Dorsolateral prefrontal cortex (tissue), 120 donors: ENCODE measurements at regions of chr17 and their contacts with region 1.

Region 1: DNA sequence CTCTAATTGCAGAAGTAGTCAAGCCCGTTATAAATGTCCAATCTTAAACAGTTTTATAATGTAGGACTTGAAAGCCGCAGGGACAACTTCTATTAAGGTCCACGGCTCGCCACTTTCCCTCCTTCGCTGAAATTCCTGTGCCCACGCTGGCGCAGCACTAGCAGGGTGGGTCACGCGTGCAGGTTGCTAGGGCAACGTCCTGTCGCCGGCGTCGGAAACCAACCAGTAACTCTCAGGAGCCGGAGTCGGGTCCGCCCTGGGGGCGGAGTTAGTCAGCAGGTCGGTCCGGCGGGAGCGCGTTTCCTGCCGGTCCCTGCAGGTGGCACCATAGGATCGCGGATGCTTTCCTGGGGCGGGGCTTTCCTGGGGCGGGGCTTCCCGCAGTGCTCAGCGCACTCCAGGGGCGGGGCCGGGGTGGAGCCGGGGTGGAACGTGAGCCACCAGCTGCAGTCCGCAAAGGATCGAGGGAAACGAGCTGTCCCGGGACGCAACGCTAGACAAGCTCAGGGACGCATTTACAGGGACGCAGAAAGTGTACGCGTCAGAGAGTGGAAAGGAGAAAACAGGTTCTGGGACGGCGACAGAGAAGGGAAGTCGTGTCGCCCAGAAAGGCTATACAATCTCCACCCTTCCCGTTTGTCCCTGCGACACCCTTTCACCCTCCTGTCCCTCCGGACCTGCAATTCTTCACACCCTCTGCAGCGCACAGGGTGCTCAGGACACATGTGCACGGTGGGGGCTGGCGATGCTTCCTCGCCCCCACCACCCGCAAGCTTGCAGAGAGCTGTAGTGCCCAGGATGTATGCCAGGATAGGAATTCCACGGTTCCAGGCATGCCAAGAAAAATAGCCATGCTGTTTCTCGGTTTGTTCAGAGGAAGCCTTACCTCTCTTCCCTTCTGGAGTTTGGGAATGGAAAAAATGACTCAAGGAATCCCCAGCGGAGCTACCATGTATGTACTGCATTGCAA is 12.4 kb downstream of the COPZ2 start:
- DNase-seq: peak; percentile 97 to 99 (median 98)
- H3K4me3 ChIP-seq: peak overlapping the region; percentile 43 to 84 (median 65)
- H3K27ac ChIP-seq: peak overlapping the region in 47 of 59 donors; percentile 5 to 92 (median 84)
- H3K27me3 ChIP-seq: no peaks in the 10 kb centered on the region
- CTCF ChIP-seq: peak; percentile 55 to 91 (median 79)

Region 2: DNA sequence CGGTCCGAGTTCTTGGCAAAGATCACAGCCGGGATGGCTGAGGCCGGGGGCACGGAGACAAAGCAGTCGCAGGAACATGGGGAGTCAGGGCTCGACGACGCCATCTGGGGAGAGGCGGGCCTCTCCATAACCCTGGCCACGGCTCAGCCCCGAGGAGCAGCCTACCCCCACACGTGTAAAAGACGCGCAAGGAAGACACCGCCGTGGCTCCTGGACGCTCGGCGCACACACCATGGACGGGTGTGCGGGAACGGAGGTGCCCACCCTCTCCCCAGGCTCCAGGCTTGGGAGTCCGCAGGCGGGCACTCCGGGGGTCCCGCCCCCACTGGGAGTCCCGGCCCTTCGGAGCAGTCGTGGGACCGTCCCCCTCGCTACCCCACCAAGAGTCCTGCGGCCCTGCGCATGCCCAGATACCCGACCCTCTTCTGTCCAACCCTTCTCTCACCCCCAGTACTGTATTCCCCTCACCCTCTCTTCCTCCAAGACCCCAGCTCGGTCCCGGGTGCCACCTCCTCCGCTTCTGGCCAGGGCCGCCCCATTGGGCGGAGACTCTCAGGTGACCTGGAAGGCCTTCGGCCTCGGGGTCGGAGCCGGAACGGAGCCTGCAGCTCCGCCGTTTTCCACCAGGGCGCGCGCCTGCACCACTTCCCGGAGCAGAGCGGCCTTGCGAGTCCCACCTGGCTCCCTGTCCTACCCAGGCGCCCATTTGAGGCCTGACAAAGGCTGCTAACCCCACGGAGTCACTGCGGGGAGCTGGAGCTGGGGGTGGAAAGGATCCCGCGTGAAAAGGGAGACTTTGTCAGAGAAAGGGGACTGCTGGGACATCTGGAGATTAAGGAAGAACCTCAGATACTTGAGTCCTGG is 184.2 kb before region 1 on chr17 and contains the start of gene SCRN2:
- intact Hi-C with region 1: loop called in 1 of 2 experiments (anchors 5 kb)
- DNase-seq: peak; percentile 78 to 93 (median 86)
- H3K4me3 ChIP-seq: peak within 1 kb of the TSS; percentile 53 to 97 (median 80)
- H3K27ac ChIP-seq: peak within 1 kb of the TSS in 54 of 59 donors; percentile 1 to 88 (median 66)
- H3K27me3 ChIP-seq: peaks cover 0 to 16% (median under 1%) of the 10 kb centered on the region in 45 donors
- CTCF ChIP-seq: peak; percentile 75 to 99 (median 96)
- total RNA-seq, gene SCRN2: 18.1 to 42.2 (median 27.6) TPM

Region 3: GRCh38 chr17:48074315-48075081 is 49.3 kb after region 1 on chr17:
- intact Hi-C with region 1: loop called (anchors 1 to 2 kb)
- DNase-seq: peak in 6 of 10 donors; percentile 37 to 90 (median 68)
- H3K4me3 ChIP-seq: no peak overlapping the region
- H3K27ac ChIP-seq: peak overlapping the region in 23 of 59 donors; percentile 7 to 67 (median 27)
- H3K27me3 ChIP-seq: no peaks in the 10 kb centered on the region
- CTCF ChIP-seq: peak; percentile 66 to 95 (median 86)

Region 4: DNA sequence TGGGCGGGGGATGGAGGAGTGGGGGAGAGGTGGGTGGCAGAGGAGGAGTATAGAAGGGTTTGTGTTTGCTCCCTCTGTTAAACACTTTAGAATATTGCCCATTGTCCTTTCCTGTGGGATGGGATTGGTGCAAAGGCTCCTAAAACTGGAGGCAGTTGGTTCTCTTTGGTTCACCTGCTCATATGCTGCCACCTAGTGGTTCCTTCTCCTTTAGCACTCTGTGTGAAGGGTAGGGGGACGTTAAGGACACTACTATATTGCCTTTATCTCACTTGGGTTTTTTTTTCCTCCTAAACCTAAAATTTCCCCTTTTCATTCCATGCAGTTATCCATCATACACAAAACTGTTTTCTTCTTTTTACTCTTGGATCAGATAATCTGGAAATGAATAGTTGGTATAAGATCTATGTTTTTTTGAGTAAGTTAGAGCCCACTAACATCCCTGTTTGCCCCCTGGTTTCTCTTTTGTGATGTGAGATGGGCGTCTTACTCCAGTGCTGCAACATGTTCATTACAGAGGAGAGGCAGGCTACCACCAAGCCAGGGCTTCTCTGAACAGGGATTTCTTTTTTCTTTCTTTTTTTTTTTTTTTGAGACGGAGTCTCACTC is 106.1 kb after region 1 on chr17:
- intact Hi-C with region 1: loop called (anchors 2 kb)
- DNase-seq: peak in 4 of 10 donors; percentile 38 to 60 (median 53)
- H3K4me3 ChIP-seq: no peak overlapping the region
- H3K27ac ChIP-seq: no peak overlapping the region
- H3K27me3 ChIP-seq: no peaks in the 10 kb centered on the region
- CTCF ChIP-seq: peak; percentile 50 to 95 (median 87)

Region 5: DNA sequence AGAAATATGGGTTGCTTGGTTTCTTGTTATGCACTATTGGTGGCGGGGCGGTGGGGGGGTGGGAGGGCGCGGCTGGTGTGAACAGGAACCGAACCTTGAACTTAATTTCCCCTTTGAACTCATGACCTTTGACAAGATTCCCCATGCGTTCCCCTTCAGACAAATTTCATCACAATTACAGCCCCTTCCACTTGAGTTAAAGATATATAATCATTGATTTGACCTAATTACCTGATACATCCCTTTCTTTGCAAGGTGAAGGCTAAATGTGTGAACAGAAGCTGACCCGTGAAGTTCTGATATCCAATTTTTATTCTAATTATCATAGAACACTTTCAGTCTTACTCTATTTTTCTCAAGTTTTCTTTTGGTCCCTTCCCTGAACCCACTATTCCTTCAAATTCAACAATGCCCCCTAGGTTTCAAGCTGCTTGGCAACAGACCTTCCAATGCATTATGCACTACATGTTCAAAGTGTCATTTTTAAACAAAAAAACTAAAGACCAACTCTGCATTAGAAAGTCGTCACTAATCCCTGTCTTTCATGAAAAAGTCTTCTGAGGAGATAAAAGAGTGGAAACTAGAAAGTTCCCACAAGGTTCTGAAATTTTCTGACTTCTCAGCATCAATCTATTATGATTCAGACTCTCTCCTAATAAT is 288.0 kb after region 1 on chr17:
- intact Hi-C with region 1: no loop called
- DNase-seq: no peak
- H3K4me3 ChIP-seq: no peak overlapping the region
- H3K27ac ChIP-seq: no peak overlapping the region
- H3K27me3 ChIP-seq: peaks cover 0 to 99% (median 73%) of the 10 kb centered on the region in 45 donors
- CTCF ChIP-seq: no peak

Region 6: GRCh38 chr17:48457080-48457836 is 432.0 kb after region 1 on chr17:
- intact Hi-C with region 1: loop called in 1 of 2 experiments (anchors 10 kb)
- DNase-seq: peak in 8 of 10 donors; percentile 11 to 53 (median 30)
- H3K4me3 ChIP-seq: no peak overlapping the region
- H3K27ac ChIP-seq: no peak overlapping the region
- H3K27me3 ChIP-seq: peaks cover 0 to 75% (median 39%) of the 10 kb centered on the region in 45 donors
- CTCF ChIP-seq: peak; percentile 59 to 91 (median 82)

Region 7: GRCh38 chr17:48618256-48618897 is 593.2 kb after region 1 on chr17:
- intact Hi-C with region 1: loop called (anchors 2 to 5 kb)
- DNase-seq: peak; percentile 78 to 91 (median 82)
- H3K4me3 ChIP-seq: no peak overlapping the region
- H3K27ac ChIP-seq: no peak overlapping the region
- H3K27me3 ChIP-seq: peaks cover 31 to 100% (median 98%) of the 10 kb centered on the region in 45 donors
- CTCF ChIP-seq: peak; percentile 56 to 100 (median 98)

Region 8: GRCh38 chr17:48878918-48879898 is 854.0 kb after region 1 on chr17:
- intact Hi-C with region 1: loop called in 1 of 2 experiments (anchors 10 kb)
- DNase-seq: peak in 5 of 10 donors; percentile 27 to 60 (median 50)
- H3K4me3 ChIP-seq: no peak overlapping the region
- H3K27ac ChIP-seq: no peak overlapping the region
- H3K27me3 ChIP-seq: no peaks in the 10 kb centered on the region
- CTCF ChIP-seq: peak; percentile 61 to 97 (median 88)